CD4-positive, alpha-beta memory T cell (primary cell): ENCODE measurements at regions of chr4 and their contacts with region 1.

Region 1: GRCh38 chr4:173013232-173013930 is 155.2 kb upstream of the GALNT7 start:
- DNase-seq: peak in 4 of 5 donors; percentile 38 to 53 (median 46)
- H3K4me3 ChIP-seq: no peak overlapping the region
- H3K4me3 Mint-ChIP-seq: no peak overlapping the region
- H3K27ac ChIP-seq: no peak overlapping the region
- H3K27ac Mint-ChIP-seq: no peak overlapping the region
- H3K4me1 ChIP-seq: no peaks in the 10 kb centered on the region
- H3K4me1 Mint-ChIP-seq: peaks cover 0 to 2% (median 0%) of the 10 kb centered on the region in 4 donors
- H3K27me3 ChIP-seq: no peaks in the 10 kb centered on the region
- H3K27me3 Mint-ChIP-seq: peaks cover 0 to 3% of the 10 kb centered on the region in 2 donors

Region 2: DNA sequence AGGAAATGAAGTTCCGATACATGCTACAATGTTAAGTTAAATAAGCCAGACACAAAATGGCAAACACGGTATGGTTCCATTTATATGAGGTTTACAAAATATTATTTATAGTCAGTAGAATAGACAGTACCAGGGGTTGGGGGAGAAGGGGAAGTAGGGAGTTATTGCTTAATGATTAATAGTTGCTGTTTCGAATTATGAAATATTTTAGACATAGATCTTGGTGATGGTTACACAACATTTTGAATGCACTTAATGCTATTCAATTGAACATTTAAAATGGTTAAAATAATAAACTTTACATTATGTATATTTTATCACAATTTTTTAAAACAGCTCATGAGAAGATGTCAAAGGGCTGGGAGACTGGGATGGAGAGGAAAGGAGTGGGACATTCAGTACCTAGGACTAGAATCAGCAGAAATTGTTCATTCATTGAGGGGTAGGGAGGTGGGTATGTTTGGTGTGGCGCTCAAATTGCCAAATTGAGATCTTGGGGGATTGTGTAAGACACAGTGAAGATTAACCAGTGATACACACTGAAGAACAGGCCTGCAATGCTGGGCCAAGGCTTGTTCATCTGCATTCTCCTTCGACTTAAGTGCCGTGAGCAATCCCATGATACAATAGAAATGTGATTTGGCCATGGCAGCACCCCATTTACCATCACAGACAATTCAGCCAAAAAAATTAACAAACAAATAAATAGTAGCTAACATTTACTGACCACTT is 10.4 kb before region 1 on chr4:
- CTCF ChIA-PET with region 1: interaction called, 15 read pairs
- POLR2A ChIA-PET with region 1: no interaction called
- intact Hi-C with region 1: no loop called
- DNase-seq: no peak
- H3K4me3 ChIP-seq: no peak overlapping the region
- H3K4me3 Mint-ChIP-seq: no peak overlapping the region
- H3K27ac ChIP-seq: no peak overlapping the region
- H3K27ac Mint-ChIP-seq: no peak overlapping the region
- H3K4me1 ChIP-seq: no peaks in the 10 kb centered on the region
- H3K4me1 Mint-ChIP-seq: no peaks in the 10 kb centered on the region
- H3K27me3 ChIP-seq: no peaks in the 10 kb centered on the region
- H3K27me3 Mint-ChIP-seq: peaks cover 8 to 12% of the 10 kb centered on the region in 2 donors

Region 3: GRCh38 chr4:173257732-173258717 is 244.6 kb after region 1 on chr4:
- CTCF ChIA-PET with region 1: interaction called, 135 read pairs
- POLR2A ChIA-PET with region 1: interaction called, 6 read pairs
- intact Hi-C with region 1: loop called (anchors 1 kb)
- DNase-seq: peak; percentile 46 to 55 (median 51)
- H3K4me3 ChIP-seq: no peak overlapping the region
- H3K4me3 Mint-ChIP-seq: no peak overlapping the region
- H3K27ac ChIP-seq: no peak overlapping the region
- H3K27ac Mint-ChIP-seq: no peak overlapping the region
- H3K4me1 ChIP-seq: no peaks in the 10 kb centered on the region
- H3K4me1 Mint-ChIP-seq: peaks cover 4 to 9% (median 6%) of the 10 kb centered on the region in 4 donors
- H3K27me3 ChIP-seq: no peaks in the 10 kb centered on the region
- H3K27me3 Mint-ChIP-seq: no peaks in the 10 kb centered on the region

Region 4: DNA sequence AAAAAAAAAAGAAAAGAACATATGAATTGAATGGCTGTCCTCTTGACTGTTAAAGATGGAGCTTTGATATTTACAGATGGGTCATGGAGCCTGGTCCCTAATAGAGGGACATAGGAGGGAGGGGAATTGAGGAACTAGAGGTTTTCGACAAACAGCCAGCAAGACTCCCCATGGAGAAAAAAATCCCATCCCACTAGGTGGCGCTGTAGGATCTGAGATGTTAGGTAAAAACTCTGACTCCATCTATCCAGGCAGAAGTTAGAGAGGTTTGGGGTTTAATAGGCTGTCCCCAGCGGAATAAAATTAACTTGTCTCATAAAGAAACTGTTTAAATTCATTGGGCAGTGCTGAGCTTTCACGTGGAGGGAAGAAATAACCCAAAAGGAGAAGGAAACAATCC is 274.9 kb after region 1 on chr4:
- CTCF ChIA-PET with region 1: interaction called, 19 read pairs
- POLR2A ChIA-PET with region 1: no interaction called
- intact Hi-C with region 1: no loop called
- DNase-seq: peak; percentile 45 to 68 (median 52)
- H3K4me3 ChIP-seq: no peak overlapping the region
- H3K4me3 Mint-ChIP-seq: peak overlapping the region in 6 of 8 donors; percentile 21 to 59 (median 43)
- H3K27ac ChIP-seq: no peak overlapping the region
- H3K27ac Mint-ChIP-seq: peak overlapping the region in 6 of 7 donors; percentile 16 to 78 (median 32)
- H3K4me1 ChIP-seq: peaks cover 11% of the 10 kb centered on the region
- H3K4me1 Mint-ChIP-seq: peaks cover 8 to 17% (median 13%) of the 10 kb centered on the region in 4 donors
- H3K27me3 ChIP-seq: no peaks in the 10 kb centered on the region
- H3K27me3 Mint-ChIP-seq: no peaks in the 10 kb centered on the region

Region 5: DNA sequence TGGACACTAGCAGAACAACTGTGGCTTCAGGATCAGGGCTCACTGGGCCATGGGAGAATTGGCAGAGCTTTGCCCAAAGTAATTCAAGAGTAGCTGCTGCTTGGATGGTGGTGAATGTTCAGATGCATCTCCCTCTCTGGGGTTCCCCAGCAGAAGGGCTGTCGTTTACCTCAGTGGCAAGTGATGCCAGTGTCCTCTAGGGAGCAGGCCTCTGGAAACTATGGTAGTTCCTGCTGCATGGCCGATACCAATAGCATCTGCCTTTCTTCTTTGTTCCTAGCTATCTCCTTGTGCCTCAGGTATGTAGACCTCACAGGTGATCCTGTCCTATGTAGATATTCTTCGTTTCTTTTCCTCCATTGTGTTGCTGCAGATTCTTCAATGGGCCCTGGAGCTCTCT is 294.4 kb after region 1 on chr4:
- CTCF ChIA-PET with region 1: interaction called, 20 read pairs
- POLR2A ChIA-PET with region 1: no interaction called
- intact Hi-C with region 1: no loop called
- DNase-seq: no peak
- H3K4me3 ChIP-seq: no peak overlapping the region
- H3K4me3 Mint-ChIP-seq: no peak overlapping the region
- H3K27ac ChIP-seq: no peak overlapping the region
- H3K27ac Mint-ChIP-seq: peak overlapping the region in 1 of 7 donors; percentile 5
- H3K4me1 ChIP-seq: no peaks in the 10 kb centered on the region
- H3K4me1 Mint-ChIP-seq: no peaks in the 10 kb centered on the region
- H3K27me3 ChIP-seq: no peaks in the 10 kb centered on the region
- H3K27me3 Mint-ChIP-seq: no peaks in the 10 kb centered on the region

Region 6: GRCh38 chr4:173494013-173494970 is 480.9 kb after region 1 on chr4:
- CTCF ChIA-PET with region 1: interaction called, 6 read pairs
- POLR2A ChIA-PET with region 1: no interaction called
- intact Hi-C with region 1: loop called (anchors 2 kb)
- DNase-seq: peak; percentile 60 to 71 (median 66)
- H3K4me3 ChIP-seq: peak overlapping the region; percentile 46 to 54
- H3K4me3 Mint-ChIP-seq: peak overlapping the region; percentile 85 to 94 (median 88)
- H3K27ac ChIP-seq: no peak overlapping the region
- H3K27ac Mint-ChIP-seq: peak overlapping the region in 3 of 7 donors; percentile 19 to 66 (median 32)
- H3K4me1 ChIP-seq: peaks cover 11% of the 10 kb centered on the region
- H3K4me1 Mint-ChIP-seq: peaks cover 11 to 28% (median 18%) of the 10 kb centered on the region in 4 donors
- H3K27me3 ChIP-seq: no peaks in the 10 kb centered on the region
- H3K27me3 Mint-ChIP-seq: peaks cover 15 to 19% of the 10 kb centered on the region in 2 donors